ENCODE measurements at regions of chr4 and their contacts with region 1.

Region 1: DNA sequence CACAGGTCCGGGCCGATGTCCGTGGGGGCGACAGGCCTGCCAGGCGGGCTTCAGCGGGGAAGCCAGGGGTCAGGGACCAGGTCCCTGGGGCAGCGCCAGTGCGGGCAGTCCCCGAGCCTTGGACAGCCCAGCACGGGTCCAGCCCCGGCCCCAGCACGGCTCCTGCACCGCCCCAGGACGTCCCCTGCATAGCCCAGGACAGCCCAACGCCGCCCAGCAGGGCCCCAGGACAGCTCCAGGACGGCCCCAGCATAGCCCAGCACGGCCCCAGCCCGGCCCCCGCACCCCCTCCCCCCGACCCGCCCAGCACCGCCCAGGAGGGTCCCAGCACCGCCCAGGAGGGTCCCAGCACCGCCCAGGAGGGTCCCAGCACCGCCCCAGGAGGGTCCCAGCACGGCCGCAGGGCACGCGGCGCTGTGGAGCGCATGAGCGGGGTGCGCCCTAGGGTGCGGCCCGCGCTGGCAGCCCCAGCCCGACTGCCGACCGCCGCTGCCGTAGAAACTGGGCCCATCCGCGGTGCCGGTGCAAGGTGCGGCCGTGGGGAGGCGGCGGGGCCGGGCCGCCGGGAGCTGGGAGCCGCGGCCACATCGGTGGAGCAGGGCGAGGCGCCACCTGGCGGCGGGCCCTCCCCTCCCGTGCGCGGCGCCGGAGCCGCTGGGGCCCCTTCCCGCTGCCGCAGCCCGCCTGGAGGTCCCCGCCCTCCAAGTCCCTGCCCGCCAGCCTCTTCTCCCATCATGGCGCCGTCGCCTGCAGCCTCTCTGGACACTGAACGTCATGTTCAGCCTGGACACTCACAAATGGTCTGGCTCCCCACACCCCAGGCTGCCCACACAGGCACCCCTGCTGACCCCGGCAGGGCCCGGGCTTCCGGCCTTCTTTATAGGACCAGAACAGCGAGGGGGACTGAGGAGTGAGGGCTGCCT is 106.8 kb upstream of the NKX1-1 start:
- DNase-seq: peak; percentile 81

Region 2: GRCh38 chr4:656436-657337 is 856.3 kb before region 1 on chr4:
- intact Hi-C with region 1: loop called in 1 of 2 experiments (anchors 5 kb)
- DNase-seq: no peak

Measured in posterior vena cava (tissue), 2 donors.